H1 (cell line): ENCODE measurements at regions of chr5 and their contacts with region 1.

Region 1: GRCh38 chr5:90488791-90489190 is 14.1 kb downstream of the POLR3G start:
- DNase-seq: no peak
- H3K4me3 ChIP-seq: no peak overlapping the region
- H3K27ac ChIP-seq: no peak overlapping the region
- H3K4me1 ChIP-seq: peaks cover 0 to 5% (median 3%) of the 10 kb centered on the region in 4 experiments; a peak in 2 of 7 replicates
- H3K27me3 ChIP-seq: no peaks in the 10 kb centered on the region
- CTCF ChIP-seq: no peak
- EP300 ChIP-seq: no peak
- POLR2A ChIP-seq: no peak
- RAD21 ChIP-seq: no peak

Region 2: GRCh38 chr5:90477073-90477472 is 11.7 kb before region 1 on chr5:
- CTCF ChIA-PET with region 1: interaction called, 4 read pairs
- POLR2A ChIA-PET with region 1: interaction called, 10 read pairs
- DNase-seq: peak; percentile 61 to 64
- H3K4me3 ChIP-seq: peak overlapping the region; percentile 11 to 91 (median 71); a peak in 6 of 8 replicates
- H3K27ac ChIP-seq: 0 out of 2 replicates have a peak overlapping the region, but pooled peaks have one; percentile 63
- H3K4me1 ChIP-seq: peaks cover 5 to 26% (median 14%) of the 10 kb centered on the region in 4 experiments; a peak in 6 of 7 replicates
- H3K27me3 ChIP-seq: no peaks in the 10 kb centered on the region
- CTCF ChIP-seq: peak in 2 of 3 experiments; percentile 12 to 24; a peak in 2 of 4 replicates
- EP300 ChIP-seq: no peak; a peak in 1 of 3 replicates
- POLR2A ChIP-seq: no peak
- RAD21 ChIP-seq: no peak; a peak in 1 of 4 replicates

Region 3: DNA sequence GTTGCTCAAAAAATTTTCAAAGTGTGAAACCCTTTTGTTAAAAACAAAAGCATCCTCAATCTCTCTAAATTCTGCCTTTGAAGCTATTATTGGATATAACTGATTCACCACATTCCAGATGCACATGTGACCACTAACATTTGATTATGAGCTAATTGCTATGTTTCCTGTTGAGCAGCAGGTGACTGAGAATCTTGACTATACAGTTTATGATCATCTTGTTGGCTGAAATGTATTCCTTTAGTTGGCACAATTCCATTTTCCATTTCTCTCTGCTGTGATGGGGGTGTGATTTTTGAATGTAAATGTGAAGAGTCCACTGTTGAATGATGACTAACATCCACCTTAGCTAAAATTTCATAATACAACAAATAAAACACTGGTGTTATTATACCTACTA is 29.9 kb after region 1 on chr5:
- CTCF ChIA-PET with region 1: no interaction called
- POLR2A ChIA-PET with region 1: no interaction called
- DNase-seq: no peak
- H3K4me3 ChIP-seq: no peak overlapping the region
- H3K27ac ChIP-seq: no peak overlapping the region
- H3K4me1 ChIP-seq: no peaks in the 10 kb centered on the region
- H3K27me3 ChIP-seq: no peaks in the 10 kb centered on the region
- CTCF ChIP-seq: no peak
- EP300 ChIP-seq: no peak
- POLR2A ChIP-seq: no peak
- RAD21 ChIP-seq: no peak

Region 4: GRCh38 chr5:90581956-90582355 is 93.2 kb after region 1 on chr5:
- CTCF ChIA-PET with region 1: no interaction called
- POLR2A ChIA-PET with region 1: no interaction called
- DNase-seq: no peak
- H3K4me3 ChIP-seq: no peak overlapping the region
- H3K27ac ChIP-seq: no peak overlapping the region
- H3K4me1 ChIP-seq: peaks cover 0 to 4% (median 1%) of the 10 kb centered on the region in 4 experiments; a peak in 5 of 7 replicates
- H3K27me3 ChIP-seq: no peaks in the 10 kb centered on the region
- CTCF ChIP-seq: no peak
- EP300 ChIP-seq: no peak
- POLR2A ChIP-seq: no peak
- RAD21 ChIP-seq: no peak